H1 (cell line): ENCODE measurements at regions of chr9 and their contacts with region 1.

Region 1: GRCh38 chr9:70553707-70554673 is 139.5 kb upstream of the KLF9 start:
- DNase-seq: peak; percentile 39 to 54
- H3K4me3 ChIP-seq: no peak overlapping the region; a peak in 1 of 8 replicates
- H3K27ac ChIP-seq: peak overlapping the region; percentile 64; the same call in 1 of the 2 replicates
- H3K4me1 ChIP-seq: peaks cover 7 to 14% (median 10%) of the 10 kb centered on the region in 4 experiments; a peak in 5 of 7 replicates
- H3K27me3 ChIP-seq: no peaks in the 10 kb centered on the region
- CTCF ChIP-seq: no peak
- EP300 ChIP-seq: no peak
- POLR2A ChIP-seq: peak in 1 of 2 experiments; percentile 75; a peak in 1 of 3 replicates
- RAD21 ChIP-seq: no peak

Region 2: DNA sequence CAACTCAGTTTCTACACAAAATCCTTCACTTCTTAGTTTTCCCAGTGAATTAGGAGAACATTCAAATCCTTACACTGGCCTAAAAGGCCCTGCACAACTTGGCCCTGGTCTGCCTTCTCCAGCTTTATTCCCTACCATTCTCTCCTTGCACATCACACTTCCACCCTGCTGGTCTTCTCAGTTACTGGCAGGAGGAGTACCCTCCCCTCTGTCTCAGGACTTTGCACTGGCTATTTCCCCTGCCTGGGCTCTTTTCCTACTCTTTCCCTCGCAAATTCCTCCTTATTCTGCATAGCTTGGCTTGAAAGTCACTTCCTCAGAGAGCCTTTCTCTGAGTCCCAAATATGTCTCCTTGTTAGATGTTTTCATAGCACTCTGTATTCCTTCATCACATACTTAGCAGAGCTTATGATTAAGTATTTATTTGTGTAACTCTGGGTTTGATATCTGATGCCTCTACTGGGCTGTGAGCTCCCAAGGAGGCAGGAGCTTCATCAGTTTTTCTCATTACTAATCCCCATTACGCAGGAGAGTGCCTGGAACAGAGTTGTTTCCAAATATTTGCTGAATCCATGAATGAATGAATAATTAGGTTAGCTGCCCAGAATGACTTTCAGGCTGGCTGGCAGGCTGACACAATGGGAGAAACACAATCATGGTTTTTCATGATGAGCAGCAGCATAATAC is 20.3 kb after region 1 on chr9:
- CTCF ChIA-PET with region 1: interaction called, 4 read pairs
- POLR2A ChIA-PET with region 1: interaction called, 11 read pairs
- DNase-seq: no peak
- H3K4me3 ChIP-seq: no peak overlapping the region
- H3K27ac ChIP-seq: no peak overlapping the region
- H3K4me1 ChIP-seq: no peaks in the 10 kb centered on the region; a peak in 3 of 7 replicates
- H3K27me3 ChIP-seq: no peaks in the 10 kb centered on the region
- CTCF ChIP-seq: no peak
- EP300 ChIP-seq: no peak
- POLR2A ChIP-seq: no peak
- RAD21 ChIP-seq: no peak

Region 3: DNA sequence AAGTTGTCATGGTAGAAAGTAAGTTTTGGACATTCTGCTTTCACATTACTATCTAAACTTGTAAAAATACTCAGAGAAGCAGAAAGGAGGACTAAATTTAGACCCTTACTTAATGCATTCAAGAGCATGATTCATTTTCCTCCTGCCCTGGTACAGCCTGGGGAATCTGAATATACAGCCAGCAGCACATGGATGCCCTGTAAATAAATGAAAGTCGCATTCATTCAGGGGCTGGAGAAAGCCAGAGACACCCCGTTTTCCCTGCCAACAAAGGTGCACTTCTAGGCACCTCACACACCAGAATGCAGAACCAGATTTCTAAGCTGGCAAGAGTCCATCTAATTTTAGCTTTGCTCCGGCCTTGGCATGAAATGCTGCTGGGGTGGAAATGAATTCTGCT is 33.2 kb after region 1 on chr9:
- CTCF ChIA-PET with region 1: no interaction called
- POLR2A ChIA-PET with region 1: no interaction called
- DNase-seq: no peak
- H3K4me3 ChIP-seq: no peak overlapping the region
- H3K27ac ChIP-seq: no peak overlapping the region
- H3K4me1 ChIP-seq: no peaks in the 10 kb centered on the region
- H3K27me3 ChIP-seq: no peaks in the 10 kb centered on the region
- CTCF ChIP-seq: no peak
- EP300 ChIP-seq: no peak
- POLR2A ChIP-seq: no peak
- RAD21 ChIP-seq: no peak